Heart left ventricle (tissue), 16 donors: ENCODE measurements at regions of chr12 and their contacts with region 1.

Region 1: DNA sequence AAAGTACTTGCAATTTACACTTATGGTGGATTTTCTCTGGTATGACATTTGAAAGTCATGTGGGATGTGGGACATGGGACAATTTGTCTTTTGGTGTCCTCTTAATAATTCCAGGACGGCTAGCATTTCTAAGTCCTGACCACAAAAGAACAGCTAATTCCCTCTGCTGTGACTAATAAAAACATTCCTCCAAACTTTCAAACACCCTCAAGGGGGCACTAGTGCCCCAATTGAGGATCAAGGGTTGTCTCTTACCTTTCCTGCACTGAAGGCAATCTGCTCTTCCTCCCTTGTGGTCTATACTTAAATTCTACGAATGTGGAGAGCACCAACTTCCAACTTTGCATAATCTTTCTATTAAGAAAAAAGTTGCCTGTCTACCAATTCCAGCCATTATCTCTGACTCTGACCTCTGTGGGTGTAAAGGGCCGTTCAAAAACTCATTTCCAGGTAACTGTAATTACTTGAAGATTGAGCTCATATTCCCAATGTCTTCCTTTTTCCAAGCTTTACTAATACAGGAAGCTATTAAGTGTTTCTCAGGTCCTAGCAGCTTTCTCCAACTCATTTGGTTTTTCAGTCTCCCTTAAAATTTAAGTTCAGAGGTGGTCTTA is 210.2 kb downstream of the PTPRO start:
- DNase-seq: no peak
- ATAC-seq: peak in 3 of 4 donors; percentile 54 to 69 (median 57)
- H3K4me3 ChIP-seq: no peak overlapping the region
- H3K27ac ChIP-seq: no peak overlapping the region
- H3K4me1 ChIP-seq: peaks cover 0 to 26% (median 0%) of the 10 kb centered on the region in 12 donors
- H3K27me3 ChIP-seq: no peaks in the 10 kb centered on the region
- CTCF ChIP-seq: peak in 11 of 12 donors; percentile 25 to 58 (median 38)
- POLR2A ChIP-seq: no peak

Region 2: GRCh38 chr12:15336768-15337553 is 195.5 kb before region 1 on chr12:
- intact Hi-C with region 1: no loop called
- DNase-seq: no peak
- ATAC-seq: no peak
- H3K4me3 ChIP-seq: no peak overlapping the region
- H3K27ac ChIP-seq: no peak overlapping the region
- H3K4me1 ChIP-seq: no peaks in the 10 kb centered on the region
- H3K27me3 ChIP-seq: peaks cover 0 to 12% (median 0%) of the 10 kb centered on the region in 9 donors
- CTCF ChIP-seq: no peak
- POLR2A ChIP-seq: no peak

Region 3: DNA sequence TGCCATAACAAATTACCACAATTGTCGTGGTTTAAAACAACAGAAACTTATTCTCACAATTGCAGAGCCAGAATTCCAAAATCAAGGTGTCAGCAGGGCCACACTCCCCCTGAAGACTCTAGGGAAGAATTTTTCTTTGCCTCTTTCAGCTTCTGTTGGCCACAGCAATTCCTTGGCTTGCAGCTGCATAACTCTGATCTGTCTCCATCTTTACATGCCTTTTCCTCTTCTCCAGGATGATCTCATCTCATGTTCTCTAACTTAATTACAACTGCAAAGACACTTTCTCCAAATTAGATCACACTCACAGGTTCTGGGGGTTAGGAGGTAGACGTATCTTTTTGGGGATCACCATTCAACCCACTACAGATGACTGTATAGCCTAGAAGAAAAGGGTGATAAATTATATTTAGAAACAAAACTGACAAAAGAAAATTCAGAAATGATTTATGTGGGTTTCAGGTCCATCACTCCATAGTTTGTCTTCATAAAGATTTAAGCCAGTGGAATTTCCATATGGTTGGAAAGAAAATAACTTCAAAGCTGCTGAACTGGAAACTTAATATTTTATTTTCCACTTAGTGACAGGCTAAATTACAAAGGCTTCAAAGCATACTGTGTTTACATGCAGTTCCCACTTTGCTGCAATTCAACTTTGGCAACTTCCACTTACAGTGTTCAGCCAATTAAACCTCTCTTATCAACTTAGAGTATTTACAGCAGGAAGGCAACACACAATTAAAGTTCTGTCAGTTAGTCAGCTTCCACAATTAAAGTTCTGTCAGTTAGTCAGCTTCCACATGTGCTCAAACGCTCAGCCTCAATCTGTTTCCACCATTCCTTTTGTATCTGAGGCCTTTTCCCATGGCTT is 43.4 kb after region 1 on chr12:
- intact Hi-C with region 1: loop called in 6 of 10 experiments (anchors 5 to 10 kb)
- DNase-seq: no peak
- ATAC-seq: peak in 1 of 4 donors; percentile 59
- H3K4me3 ChIP-seq: no peak overlapping the region
- H3K27ac ChIP-seq: no peak overlapping the region
- H3K4me1 ChIP-seq: peaks cover 0 to 6% (median 0%) of the 10 kb centered on the region in 12 donors
- H3K27me3 ChIP-seq: peaks cover 0 to 7% (median 0%) of the 10 kb centered on the region in 9 donors
- CTCF ChIP-seq: no peak
- POLR2A ChIP-seq: no peak

Region 4: GRCh38 chr12:15584366-15585041 is 52.0 kb after region 1 on chr12:
- intact Hi-C with region 1: loop called in 7 of 10 experiments (anchors 2 to 10 kb)
- DNase-seq: no peak
- ATAC-seq: no peak
- H3K4me3 ChIP-seq: no peak overlapping the region
- H3K27ac ChIP-seq: no peak overlapping the region
- H3K4me1 ChIP-seq: no peaks in the 10 kb centered on the region
- H3K27me3 ChIP-seq: peaks cover 0 to 9% (median 0%) of the 10 kb centered on the region in 9 donors
- CTCF ChIP-seq: peak; percentile 37 to 78 (median 61)
- POLR2A ChIP-seq: no peak